Mammary epithelial cell (primary cell): ENCODE measurements at regions of chr5 and their contacts with region 1.

Region 1: DNA sequence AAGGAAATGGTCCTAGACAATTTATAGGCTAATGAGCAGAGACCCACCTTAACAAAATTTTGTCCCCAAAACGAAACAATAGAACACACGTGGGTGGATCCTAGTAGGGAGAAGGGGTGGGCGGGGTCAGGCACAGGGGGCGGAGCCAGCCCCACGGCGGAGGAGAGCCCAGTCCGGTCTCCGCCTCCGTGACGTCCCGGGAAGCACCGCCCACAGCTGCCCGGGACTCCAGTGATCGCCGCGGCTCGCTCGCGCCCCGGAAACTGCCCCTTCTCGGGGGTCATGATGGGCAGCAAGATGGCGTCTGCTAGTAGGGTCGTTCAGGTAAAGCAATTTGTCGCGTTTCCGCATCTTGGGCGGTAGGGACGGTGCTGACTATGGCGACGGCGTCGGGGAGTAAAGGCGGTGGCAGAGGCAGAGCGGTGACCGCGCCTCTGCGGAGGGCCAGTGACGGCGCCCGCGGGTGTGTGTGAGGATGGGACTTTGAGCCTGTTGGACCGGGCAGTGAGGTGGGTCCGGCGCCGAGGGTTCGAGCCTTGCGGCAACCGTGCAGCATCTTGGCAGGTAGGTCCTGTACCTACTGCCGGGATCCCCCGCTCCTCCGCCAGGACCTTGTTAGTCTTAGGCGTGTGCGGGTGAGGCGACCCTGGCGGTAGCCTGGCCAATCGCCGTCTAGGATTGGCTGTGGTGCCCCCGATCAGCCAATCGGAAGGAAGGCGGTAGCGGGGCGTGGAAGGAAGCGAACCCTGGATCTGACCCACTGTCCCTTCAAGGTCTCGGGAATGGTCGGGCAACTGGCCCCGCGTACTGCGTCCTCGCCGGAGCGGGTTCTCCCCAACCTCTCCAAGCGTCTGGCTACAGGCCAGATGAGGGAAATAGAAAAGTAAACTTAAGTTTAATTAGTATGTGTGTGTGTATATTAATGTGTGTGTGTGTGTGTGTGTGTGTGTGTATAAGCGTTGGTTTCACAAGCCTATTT is 16.8 kb upstream of the CDK7 start:
- DNase-seq: peak; percentile 89
- H3K4me3 ChIP-seq: peak overlapping the region; percentile 95 to 100 (median 100)
- H3K27ac ChIP-seq: peak overlapping the region; percentile 78
- H3K4me1 ChIP-seq: peaks cover 10% of the 10 kb centered on the region
- H3K27me3 ChIP-seq: no peaks in the 10 kb centered on the region
- CTCF ChIP-seq: peak; percentile 5 to 28

Region 2: GRCh38 chr5:69189162-69190086 is 28.4 kb before region 1 on chr5 and contains the start of gene CENPH:
- CTCF ChIA-PET with region 1: no interaction called
- dilution Hi-C with region 1: no loop called
- in situ Hi-C with region 1: no loop called
- intact Hi-C with region 1: loop called (anchors 1 kb)
- DNase-seq: peak; percentile 87
- H3K4me3 ChIP-seq: peak within 1 kb of the TSS; percentile 78 to 96 (median 85)
- H3K27ac ChIP-seq: peak within 1 kb of the TSS; percentile 94
- H3K4me1 ChIP-seq: peaks cover 7% of the 10 kb centered on the region
- H3K27me3 ChIP-seq: no peaks in the 10 kb centered on the region
- CTCF ChIP-seq: no peak
- total RNA-seq, gene CENPH: 3.3 to 26.3 TPM

Region 3: DNA sequence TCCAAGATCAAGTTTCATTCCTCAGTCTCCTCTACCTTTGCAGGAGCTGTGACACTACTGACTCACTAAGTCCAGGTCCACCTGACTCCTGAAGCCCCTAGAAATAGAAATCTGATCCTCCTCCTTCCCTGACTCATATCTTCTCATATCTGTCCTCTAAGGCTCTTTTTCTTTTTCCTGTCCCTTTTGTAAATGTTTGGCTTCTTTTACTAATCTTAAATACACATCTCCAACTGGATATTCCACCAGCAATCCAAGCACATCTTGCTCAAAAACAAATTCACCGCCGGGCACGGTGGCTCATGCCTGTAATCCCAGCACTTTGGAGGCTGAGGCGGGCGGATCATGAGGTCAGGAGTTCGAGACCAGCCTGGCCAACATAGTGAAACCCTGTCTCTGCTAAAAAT is 112.2 kb after region 1 on chr5:
- CTCF ChIA-PET with region 1: no interaction called
- dilution Hi-C with region 1: no loop called
- in situ Hi-C with region 1: no loop called
- intact Hi-C with region 1: no loop called
- DNase-seq: no peak
- H3K4me3 ChIP-seq: no peak overlapping the region
- H3K27ac ChIP-seq: no peak overlapping the region
- H3K4me1 ChIP-seq: peaks cover 12% of the 10 kb centered on the region
- H3K27me3 ChIP-seq: no peaks in the 10 kb centered on the region
- CTCF ChIP-seq: no peak

Region 4: DNA sequence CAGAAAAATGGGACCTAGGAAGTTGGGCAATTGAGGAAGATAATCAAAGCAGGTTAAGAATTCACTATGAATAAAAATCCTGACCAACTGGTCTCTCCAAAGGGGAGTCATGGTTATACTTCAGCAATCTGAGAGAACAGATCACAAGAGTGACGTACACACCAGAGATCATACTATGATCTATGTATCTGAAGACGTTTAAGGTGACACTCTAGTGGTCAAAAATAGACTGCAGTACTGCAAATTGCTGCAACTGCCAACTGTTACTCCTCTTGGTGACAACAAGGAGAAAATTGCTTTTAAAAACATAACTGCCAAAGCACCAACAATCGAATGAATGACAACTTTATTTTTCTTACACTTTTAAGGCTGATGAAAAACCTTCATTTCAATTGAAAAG is 146.6 kb after region 1 on chr5:
- CTCF ChIA-PET with region 1: no interaction called
- dilution Hi-C with region 1: no loop called
- in situ Hi-C with region 1: no loop called
- intact Hi-C with region 1: no loop called
- DNase-seq: no peak
- H3K4me3 ChIP-seq: no peak overlapping the region
- H3K27ac ChIP-seq: no peak overlapping the region
- H3K4me1 ChIP-seq: no peaks in the 10 kb centered on the region
- H3K27me3 ChIP-seq: no peaks in the 10 kb centered on the region
- CTCF ChIP-seq: peak; percentile 41 to 43